ENCODE measurements at regions of chr11 and their contacts with region 1.

Region 1: DNA sequence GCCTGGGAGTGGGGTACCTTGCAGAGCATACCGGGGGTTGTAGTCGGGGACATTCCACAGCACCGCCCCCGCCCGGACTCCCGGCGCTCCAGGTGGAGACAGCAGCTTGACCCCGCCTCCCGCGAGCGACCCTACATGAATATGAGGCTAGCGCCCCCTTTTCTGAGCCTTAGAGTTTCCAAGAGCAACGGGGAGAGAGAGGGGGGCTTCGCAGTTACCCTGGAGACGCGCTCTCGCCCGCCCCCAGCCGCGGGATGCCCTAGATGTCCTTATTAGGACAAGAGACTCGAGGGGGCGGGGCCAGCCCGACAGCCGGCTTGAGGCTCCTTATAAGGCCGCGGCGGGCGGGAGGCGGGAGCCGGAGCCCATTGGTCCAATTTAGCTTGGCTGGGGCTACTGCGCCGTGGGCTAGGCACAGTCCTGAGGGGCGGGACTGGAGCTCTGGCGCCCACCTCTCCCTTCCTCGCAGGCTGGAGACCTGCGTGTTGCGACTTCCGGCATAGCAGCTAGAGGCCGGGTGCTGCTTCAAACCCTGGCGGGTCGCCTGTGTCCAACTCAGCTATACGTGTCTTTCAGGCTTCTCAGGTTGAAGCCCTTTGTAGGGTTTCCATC is 927 bp upstream of the MUS81 start:
- DNase-seq: peak; percentile 99
- H3K4me3 Mint-ChIP-seq: peak overlapping the region; percentile 84
- H3K27ac Mint-ChIP-seq: peak overlapping the region; percentile 97
- H3K4me1 Mint-ChIP-seq: peaks cover 62% of the 10 kb centered on the region
- H3K27me3 Mint-ChIP-seq: no peaks in the 10 kb centered on the region

Region 2: DNA sequence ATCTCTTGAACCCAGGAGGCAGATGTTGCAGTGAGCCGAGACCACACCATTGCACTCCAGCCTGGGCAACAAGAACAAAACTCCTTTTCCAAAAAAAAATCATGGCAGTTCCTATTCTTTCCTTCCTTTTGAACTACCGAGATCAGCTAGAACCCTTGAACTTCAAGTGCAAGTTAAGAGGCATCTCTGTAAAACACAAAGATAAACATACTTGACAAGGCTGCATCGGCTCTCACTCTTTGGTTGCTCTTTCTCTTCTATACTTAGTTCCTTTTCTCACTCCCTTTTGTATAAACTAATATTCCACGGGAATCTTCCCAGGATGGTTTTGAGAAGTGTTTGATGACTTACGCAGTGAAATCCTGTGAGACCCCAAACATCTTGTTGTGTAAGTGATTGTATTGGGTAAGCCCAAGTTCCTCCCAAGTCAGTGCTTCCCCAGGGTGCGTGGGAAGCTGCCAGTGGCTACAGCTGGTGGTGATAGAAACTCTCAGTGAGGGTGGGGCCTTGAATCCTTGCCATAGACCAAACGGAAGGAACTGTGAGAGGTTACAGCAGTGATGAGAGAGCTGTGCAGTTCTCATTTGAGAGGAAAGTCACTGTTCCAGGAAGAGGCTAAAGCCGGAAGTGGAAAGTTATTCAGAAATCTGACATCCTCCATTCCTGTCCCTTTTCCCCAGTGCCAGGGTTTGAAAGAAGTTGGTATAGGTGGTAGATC is 568.7 kb before region 1 on chr11:
- CTCF ChIA-PET with region 1: no interaction called
- POLR2A ChIA-PET with region 1: no interaction called
- DNase-seq: no peak
- H3K4me3 Mint-ChIP-seq: no peak overlapping the region
- H3K27ac Mint-ChIP-seq: peak overlapping the region; percentile 57
- H3K4me1 Mint-ChIP-seq: peaks cover 12% of the 10 kb centered on the region
- H3K27me3 Mint-ChIP-seq: no peaks in the 10 kb centered on the region

Region 3: GRCh38 chr11:65615229-65615941 is 243.9 kb before region 1 on chr11 and contains the start of gene PCNX3:
- CTCF ChIA-PET with region 1: interaction called, 10 read pairs
- POLR2A ChIA-PET with region 1: interaction called, 15 read pairs
- DNase-seq: peak; percentile 100
- H3K4me3 Mint-ChIP-seq: peak within 1 kb of the TSS; percentile 98
- H3K27ac Mint-ChIP-seq: peak within 1 kb of the TSS; percentile 95
- H3K4me1 Mint-ChIP-seq: peaks cover 44% of the 10 kb centered on the region
- H3K27me3 Mint-ChIP-seq: no peaks in the 10 kb centered on the region
- total RNA-seq, gene PCNX3: 39.8 to 40.3 TPM

Region 4: GRCh38 chr11:65711785-65712632 is 147.3 kb before region 1 on chr11 and contains the start of gene KAT5:
- CTCF ChIA-PET with region 1: interaction called, 20 read pairs
- POLR2A ChIA-PET with region 1: interaction called, 13 read pairs
- DNase-seq: peak; percentile 99
- H3K4me3 Mint-ChIP-seq: peak within 1 kb of the TSS; percentile 82
- H3K27ac Mint-ChIP-seq: peak within 1 kb of the TSS; percentile 95
- H3K4me1 Mint-ChIP-seq: peaks cover 42% of the 10 kb centered on the region
- H3K27me3 Mint-ChIP-seq: no peaks in the 10 kb centered on the region
- total RNA-seq, gene KAT5: 62.6 to 63.0 TPM

Region 5: DNA sequence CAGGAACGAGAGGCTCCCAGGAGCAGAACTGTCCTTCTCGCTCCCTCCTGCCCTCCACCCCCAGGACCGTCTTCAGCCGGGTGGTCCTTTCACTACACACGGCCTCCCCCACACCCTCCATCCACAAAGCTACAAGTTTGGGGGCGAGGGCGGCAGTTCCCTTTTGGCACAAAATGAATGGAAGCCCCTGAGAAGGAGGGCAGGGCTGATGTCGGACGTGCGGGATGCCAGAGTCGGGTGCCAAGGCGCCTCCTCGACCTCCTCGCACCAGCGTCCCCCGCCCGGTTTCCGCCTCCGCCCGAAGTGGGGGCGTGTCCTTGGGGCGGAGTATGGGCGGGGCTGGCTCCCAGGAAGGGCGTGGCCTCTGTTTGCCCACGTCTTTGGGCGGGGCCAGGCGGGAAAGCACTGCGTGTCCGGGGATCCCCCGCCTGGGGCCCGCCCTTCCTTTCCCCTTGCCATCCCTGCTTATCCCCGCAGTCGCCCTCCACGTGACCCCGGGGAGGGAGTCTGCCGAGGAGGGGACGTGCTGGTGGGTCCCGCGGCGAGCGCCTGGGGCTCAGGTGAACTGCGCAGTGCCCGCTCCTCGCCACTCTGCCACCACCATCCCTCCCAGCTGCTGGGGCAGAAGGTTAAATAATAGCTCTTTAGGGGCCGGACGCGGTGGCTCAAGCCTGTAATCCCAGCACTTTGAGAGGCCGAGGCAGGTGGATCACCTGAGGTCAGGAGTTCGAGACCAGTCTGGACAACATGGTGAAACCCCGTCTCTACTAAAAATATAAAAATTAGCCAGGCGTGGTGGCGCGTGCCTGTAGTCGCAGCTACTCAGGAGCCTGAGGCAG is 14.2 kb after region 1 on chr11:
- CTCF ChIA-PET with region 1: interaction called, 46 read pairs
- POLR2A ChIA-PET with region 1: interaction called, 135 read pairs
- DNase-seq: peak; percentile 97
- H3K4me3 Mint-ChIP-seq: peak overlapping the region; percentile 85
- H3K27ac Mint-ChIP-seq: peak overlapping the region; percentile 68
- H3K4me1 Mint-ChIP-seq: peaks cover 43% of the 10 kb centered on the region
- H3K27me3 Mint-ChIP-seq: peaks cover 10% of the 10 kb centered on the region

Region 6: GRCh38 chr11:65894034-65894591 is 34.8 kb after region 1 on chr11:
- CTCF ChIA-PET with region 1: interaction called, 251 read pairs
- POLR2A ChIA-PET with region 1: interaction called, 284 read pairs
- DNase-seq: peak; percentile 67
- H3K4me3 Mint-ChIP-seq: peak overlapping the region; percentile 97
- H3K27ac Mint-ChIP-seq: peak overlapping the region; percentile 89
- H3K4me1 Mint-ChIP-seq: peaks cover 69% of the 10 kb centered on the region
- H3K27me3 Mint-ChIP-seq: no peaks in the 10 kb centered on the region

Region 7: DNA sequence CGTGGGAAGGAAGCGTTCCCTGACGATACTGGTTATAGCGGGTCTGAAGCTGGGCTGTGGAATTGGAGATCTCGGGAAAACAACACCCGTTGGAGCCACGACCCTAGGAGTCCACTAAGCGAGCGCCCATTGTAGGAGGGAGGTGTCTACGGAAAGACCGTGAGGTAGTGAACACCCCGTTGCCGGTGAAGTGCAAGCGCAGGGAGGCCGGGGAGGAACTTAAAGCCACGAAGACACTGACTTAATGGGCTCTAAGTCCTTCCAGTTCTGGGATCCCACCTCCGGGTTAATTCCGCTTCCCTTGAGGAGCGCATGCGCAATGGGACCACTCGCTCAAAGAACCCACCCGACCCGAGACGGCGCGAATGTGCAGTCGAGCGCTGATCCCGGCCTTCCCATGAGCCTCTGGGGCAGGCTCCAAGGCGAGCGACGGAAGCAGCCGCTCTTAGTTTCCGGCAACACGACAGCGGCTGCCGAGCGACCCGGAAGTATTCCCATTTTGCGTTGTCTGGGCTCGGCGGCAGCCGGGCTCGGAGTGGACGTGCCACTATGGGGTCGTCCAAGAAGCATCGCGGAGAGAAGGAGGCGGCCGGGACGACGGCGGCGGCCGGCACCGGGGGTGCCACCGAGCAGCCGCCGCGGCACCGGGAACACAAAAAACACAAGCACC is 102.1 kb after region 1 on chr11 and contains the start of gene SART1:
- CTCF ChIA-PET with region 1: interaction called, 3 read pairs
- POLR2A ChIA-PET with region 1: interaction called, 15 read pairs
- DNase-seq: peak; percentile 96
- H3K4me3 Mint-ChIP-seq: peak within 1 kb of the TSS; percentile 98
- H3K27ac Mint-ChIP-seq: peak within 1 kb of the TSS; percentile 96
- H3K4me1 Mint-ChIP-seq: peaks cover 52% of the 10 kb centered on the region
- H3K27me3 Mint-ChIP-seq: no peaks in the 10 kb centered on the region
- total RNA-seq, gene SART1: 59.5 to 61.5 TPM

Region 8: GRCh38 chr11:66051766-66052663 is 192.7 kb after region 1 on chr11 and contains the start of gene SF3B2:
- CTCF ChIA-PET with region 1: no interaction called
- POLR2A ChIA-PET with region 1: interaction called, 12 read pairs
- DNase-seq: peak; percentile 98
- H3K4me3 Mint-ChIP-seq: peak within 1 kb of the TSS; percentile 100
- H3K27ac Mint-ChIP-seq: peak within 1 kb of the TSS; percentile 96
- H3K4me1 Mint-ChIP-seq: peaks cover 37% of the 10 kb centered on the region
- H3K27me3 Mint-ChIP-seq: peaks cover 2% of the 10 kb centered on the region
- total RNA-seq, gene SF3B2: 230 to 241 TPM